Cardiac septum (tissue), 1 donor: ENCODE measurements at regions of chr17 and their contacts with region 1.

Region 1: GRCh38 chr17:35063514-35064223 is at the start of gene RFFL:
- DNase-seq: peak; percentile 92
- total RNA-seq, gene RFFL: 15.5 TPM

Region 2: GRCh38 chr17:34998205-34998604 is 65.5 kb before region 1 on chr17:
- intact Hi-C with region 1: loop called (anchors 5 kb)
- DNase-seq: peak; percentile 93

Region 3: DNA sequence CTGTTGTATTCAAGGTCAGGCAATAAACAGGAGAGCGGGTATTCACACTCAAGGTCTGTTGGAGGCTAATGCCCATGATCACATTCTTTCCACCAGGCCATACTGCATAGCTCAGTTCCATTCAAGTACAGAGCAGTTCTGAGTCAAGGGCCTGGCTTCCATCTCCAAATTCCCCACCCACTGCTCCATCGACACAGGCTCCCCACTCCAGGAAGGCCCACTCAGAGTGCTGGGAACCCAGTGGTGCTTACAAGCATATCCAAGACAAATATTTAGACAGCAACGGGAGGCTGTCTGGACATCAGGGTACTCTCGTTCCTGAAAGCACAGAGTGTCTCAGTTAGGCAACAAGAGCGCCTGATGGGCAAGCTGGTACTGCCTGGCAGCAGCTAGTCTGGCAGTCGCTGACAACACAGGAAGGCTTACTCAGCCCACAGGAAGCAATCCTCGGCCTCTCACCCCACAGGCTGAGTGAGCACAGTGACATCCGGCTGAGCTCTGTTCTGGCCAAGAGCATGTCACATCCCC is 41.1 kb before region 1 on chr17:
- intact Hi-C with region 1: no loop called
- DNase-seq: peak; percentile 87

Region 4: GRCh38 chr17:35046740-35047283 is 16.9 kb before region 1 on chr17:
- intact Hi-C with region 1: no loop called
- DNase-seq: no peak